CD4-positive, alpha-beta memory T cell (primary cell): ENCODE measurements at regions of chr2 and their contacts with region 1.

Region 1: GRCh38 chr2:156332534-156333273 is at the start of gene NR4A2:
- DNase-seq: peak; percentile 93 to 97 (median 94)
- H3K4me3 ChIP-seq: peak within 1 kb of the TSS; percentile 62 to 91
- H3K4me3 Mint-ChIP-seq: peak within 1 kb of the TSS; percentile 93 to 97 (median 97)
- H3K27ac ChIP-seq: peak within 1 kb of the TSS; percentile 99
- H3K27ac Mint-ChIP-seq: peak within 1 kb of the TSS; percentile 99 to 100 (median 100)
- H3K4me1 ChIP-seq: peaks cover 31% of the 10 kb centered on the region
- H3K4me1 Mint-ChIP-seq: peaks cover 15 to 63% (median 28%) of the 10 kb centered on the region in 4 donors
- H3K27me3 ChIP-seq: no peaks in the 10 kb centered on the region
- H3K27me3 Mint-ChIP-seq: peaks cover 11 to 25% of the 10 kb centered on the region in 2 donors
- total RNA-seq, gene NR4A2: 2.1 TPM

Region 2: GRCh38 chr2:155980941-155981560 is 351.7 kb before region 1 on chr2:
- CTCF ChIA-PET with region 1: no interaction called
- POLR2A ChIA-PET with region 1: no interaction called
- intact Hi-C with region 1: no loop called
- DNase-seq: no peak
- H3K4me3 ChIP-seq: no peak overlapping the region
- H3K4me3 Mint-ChIP-seq: no peak overlapping the region
- H3K27ac ChIP-seq: no peak overlapping the region
- H3K27ac Mint-ChIP-seq: no peak overlapping the region
- H3K4me1 ChIP-seq: no peaks in the 10 kb centered on the region
- H3K4me1 Mint-ChIP-seq: no peaks in the 10 kb centered on the region
- H3K27me3 ChIP-seq: no peaks in the 10 kb centered on the region
- H3K27me3 Mint-ChIP-seq: peaks cover 0 to 2% of the 10 kb centered on the region in 2 donors

Region 3: GRCh38 chr2:156322051-156322685 is 10.5 kb before region 1 on chr2:
- CTCF ChIA-PET with region 1: interaction called, 13 read pairs
- POLR2A ChIA-PET with region 1: interaction called, 12 read pairs
- intact Hi-C with region 1: loop called (anchors 1 kb)
- DNase-seq: peak in 3 of 5 donors; percentile 18 to 31 (median 22)
- H3K4me3 ChIP-seq: peak overlapping the region; percentile 15 to 28
- H3K4me3 Mint-ChIP-seq: peak overlapping the region; percentile 70 to 85 (median 77)
- H3K27ac ChIP-seq: no peak overlapping the region
- H3K27ac Mint-ChIP-seq: peak overlapping the region in 5 of 7 donors; percentile 32 to 86 (median 52)
- H3K4me1 ChIP-seq: peaks cover 36% of the 10 kb centered on the region
- H3K4me1 Mint-ChIP-seq: peaks cover 21 to 58% (median 31%) of the 10 kb centered on the region in 4 donors
- H3K27me3 ChIP-seq: peaks cover 36% of the 10 kb centered on the region
- H3K27me3 Mint-ChIP-seq: peaks cover 47 to 65% of the 10 kb centered on the region in 2 donors

Region 4: GRCh38 chr2:156400706-156401678 is 68.3 kb after region 1 on chr2:
- CTCF ChIA-PET with region 1: interaction called, 41 read pairs
- POLR2A ChIA-PET with region 1: interaction called, 87 read pairs
- intact Hi-C with region 1: loop called (anchors 1 kb)
- DNase-seq: peak; percentile 84 to 88 (median 87)
- H3K4me3 ChIP-seq: peak overlapping the region; percentile 89 to 90
- H3K4me3 Mint-ChIP-seq: peak overlapping the region; percentile 89 to 99 (median 92)
- H3K27ac ChIP-seq: peak overlapping the region; percentile 87
- H3K27ac Mint-ChIP-seq: peak overlapping the region; percentile 93 to 100 (median 98)
- H3K4me1 ChIP-seq: peaks cover 8% of the 10 kb centered on the region
- H3K4me1 Mint-ChIP-seq: peaks cover 15 to 36% (median 21%) of the 10 kb centered on the region in 4 donors
- H3K27me3 ChIP-seq: no peaks in the 10 kb centered on the region
- H3K27me3 Mint-ChIP-seq: peaks cover 0 to 8% of the 10 kb centered on the region in 2 donors

Region 5: DNA sequence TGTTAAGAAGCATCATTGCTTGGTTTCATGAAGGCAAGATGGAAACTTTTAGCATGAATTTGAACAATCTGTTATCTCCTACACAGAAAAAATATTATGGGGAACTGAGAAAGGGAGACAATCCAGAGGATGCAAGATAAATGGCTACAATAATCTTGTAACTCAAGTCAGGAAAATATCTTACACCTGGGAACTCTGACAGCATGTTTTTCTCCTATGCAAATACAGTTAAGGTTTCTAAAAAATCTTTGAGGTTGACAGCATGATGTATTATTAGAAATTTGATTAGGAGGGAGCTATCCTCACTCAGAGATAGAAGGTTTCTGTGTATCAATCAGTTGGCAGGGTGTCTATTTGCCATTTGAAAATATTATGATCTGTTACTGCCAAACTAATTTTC is 179.1 kb after region 1 on chr2:
- CTCF ChIA-PET with region 1: no interaction called
- POLR2A ChIA-PET with region 1: no interaction called
- intact Hi-C with region 1: no loop called
- DNase-seq: no peak
- H3K4me3 ChIP-seq: no peak overlapping the region
- H3K4me3 Mint-ChIP-seq: no peak overlapping the region
- H3K27ac ChIP-seq: no peak overlapping the region
- H3K27ac Mint-ChIP-seq: no peak overlapping the region
- H3K4me1 ChIP-seq: no peaks in the 10 kb centered on the region
- H3K4me1 Mint-ChIP-seq: peaks cover 0 to 4% (median 0%) of the 10 kb centered on the region in 4 donors
- H3K27me3 ChIP-seq: no peaks in the 10 kb centered on the region
- H3K27me3 Mint-ChIP-seq: no peaks in the 10 kb centered on the region

Region 6: GRCh38 chr2:156589381-156590079 is 256.8 kb after region 1 on chr2:
- CTCF ChIA-PET with region 1: interaction called, 74 read pairs
- POLR2A ChIA-PET with region 1: interaction called, 19 read pairs
- intact Hi-C with region 1: loop called (anchors 1 kb)
- DNase-seq: peak; percentile 31 to 48 (median 37)
- H3K4me3 ChIP-seq: no peak overlapping the region
- H3K4me3 Mint-ChIP-seq: no peak overlapping the region
- H3K27ac ChIP-seq: no peak overlapping the region
- H3K27ac Mint-ChIP-seq: peak overlapping the region in 1 of 7 donors; percentile 2
- H3K4me1 ChIP-seq: no peaks in the 10 kb centered on the region
- H3K4me1 Mint-ChIP-seq: peaks cover 0 to 2% (median under 1%) of the 10 kb centered on the region in 4 donors
- H3K27me3 ChIP-seq: no peaks in the 10 kb centered on the region
- H3K27me3 Mint-ChIP-seq: no peaks in the 10 kb centered on the region

Region 7: DNA sequence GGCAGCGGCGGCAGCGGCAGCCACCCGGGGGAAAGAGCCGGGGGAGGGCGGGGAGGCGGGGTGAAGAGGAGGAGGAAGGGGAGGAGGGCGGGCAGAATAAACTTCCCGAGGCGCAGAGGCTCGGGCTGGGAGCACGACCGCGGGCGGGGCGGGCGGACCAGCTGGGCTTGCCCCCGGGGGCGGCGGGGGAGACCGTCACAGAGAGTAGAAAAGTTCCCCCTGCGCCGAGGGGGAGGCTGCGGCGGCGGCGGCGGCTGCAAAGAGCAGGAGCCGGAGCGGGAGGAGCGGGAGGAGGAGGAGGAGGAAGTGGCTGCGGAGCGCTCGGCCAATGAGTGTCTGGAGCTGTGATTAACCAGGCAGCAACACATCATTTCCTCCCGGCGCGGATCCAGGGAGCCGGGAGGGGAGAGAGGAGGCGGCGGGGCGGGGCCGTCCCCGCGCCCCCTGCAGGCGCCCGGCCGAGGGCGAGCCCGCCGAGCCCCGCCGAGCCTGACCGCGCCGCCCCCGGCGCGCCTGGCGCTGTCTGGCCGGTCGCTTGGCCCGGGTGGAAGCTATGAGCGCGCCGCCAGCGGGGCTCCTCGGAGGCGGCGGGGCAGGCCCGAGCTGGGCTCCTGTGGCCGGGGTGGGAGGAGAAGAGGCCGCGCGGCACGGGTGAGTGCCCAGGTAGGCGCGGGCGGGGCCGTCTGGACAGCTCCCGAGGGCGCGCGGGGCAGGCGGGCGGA is 1543.5 kb after region 1 on chr2 and contains the start of gene ACVR1:
- CTCF ChIA-PET with region 1: no interaction called
- POLR2A ChIA-PET with region 1: interaction called, 7 read pairs
- intact Hi-C with region 1: loop called (anchors 5 kb)
- DNase-seq: peak; percentile 78 to 90 (median 80)
- H3K4me3 ChIP-seq: peak within 1 kb of the TSS; percentile 74 to 76
- H3K4me3 Mint-ChIP-seq: peak within 1 kb of the TSS; percentile 94 to 100 (median 96)
- H3K27ac ChIP-seq: peak within 1 kb of the TSS; percentile 66
- H3K27ac Mint-ChIP-seq: peak within 1 kb of the TSS; percentile 88 to 96 (median 93)
- H3K4me1 ChIP-seq: peaks cover 71% of the 10 kb centered on the region
- H3K4me1 Mint-ChIP-seq: peaks cover 46 to 69% (median 60%) of the 10 kb centered on the region in 4 donors
- H3K27me3 ChIP-seq: no peaks in the 10 kb centered on the region
- H3K27me3 Mint-ChIP-seq: no peaks in the 10 kb centered on the region
- total RNA-seq, gene ACVR1: 26.9 to 31.9 TPM